B cell (primary cell): ENCODE measurements at regions of chr4 and their contacts with region 1.

Region 1: DNA sequence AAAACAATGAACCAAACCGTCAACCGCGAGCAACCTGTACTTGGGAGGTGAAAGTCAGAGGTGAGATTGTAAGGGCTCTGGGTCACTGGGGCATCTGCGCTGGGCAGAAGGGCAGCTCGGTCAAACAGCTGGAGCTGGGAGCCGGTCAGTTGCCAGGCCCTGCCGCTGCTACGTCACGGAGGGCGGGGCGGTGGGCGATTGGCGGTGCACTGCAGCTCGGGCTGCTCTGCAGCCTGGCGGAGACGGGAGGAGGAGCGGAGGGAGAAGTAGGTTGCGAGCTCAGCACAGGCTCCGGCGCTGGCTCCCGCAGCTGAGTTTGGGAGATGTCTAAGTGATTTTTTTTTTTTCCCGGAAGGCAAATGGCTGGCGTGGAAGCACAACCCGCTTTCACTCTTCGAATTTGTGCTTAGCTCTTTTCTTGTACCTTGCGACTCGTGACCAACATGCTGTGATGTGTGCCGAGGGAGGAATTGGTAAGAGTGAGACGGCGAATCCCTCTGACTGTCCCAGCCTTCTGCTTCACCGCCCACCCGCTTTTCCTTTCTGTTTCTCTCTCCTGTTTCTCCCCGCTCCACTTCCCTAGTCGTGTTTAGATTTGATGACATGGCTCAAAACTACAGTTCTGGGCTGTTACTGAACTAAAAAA is at the start of gene ATP10D:
- DNase-seq: peak; percentile 89
- ATAC-seq: peak; percentile 95
- H3K4me3 ChIP-seq: peak within 1 kb of the TSS; percentile 79 to 97 (median 90)
- H3K4me3 Mint-ChIP-seq: peak within 1 kb of the TSS; percentile 97
- H3K27ac ChIP-seq: peak within 1 kb of the TSS; percentile 93
- H3K27ac Mint-ChIP-seq: peak within 1 kb of the TSS; percentile 96
- H3K4me1 ChIP-seq: peaks cover 32 to 52% of the 10 kb centered on the region in 2 donors
- H3K4me1 Mint-ChIP-seq: peaks cover 57% of the 10 kb centered on the region
- H3K27me3 ChIP-seq: no peaks in the 10 kb centered on the region
- H3K27me3 Mint-ChIP-seq: no peaks in the 10 kb centered on the region
- CTCF ChIP-seq: no peak
- total RNA-seq, gene ATP10D: 36.2 and 41.8 TPM in 2 replicates

Region 2: GRCh38 chr4:47468691-47469365 is 16.3 kb before region 1 on chr4:
- CTCF ChIA-PET with region 1: interaction called, 44 read pairs
- POLR2A ChIA-PET with region 1: interaction called, 13 read pairs
- intact Hi-C with region 1: no loop called
- DNase-seq: no peak
- ATAC-seq: no peak
- H3K4me3 ChIP-seq: no peak overlapping the region
- H3K4me3 Mint-ChIP-seq: no peak overlapping the region
- H3K27ac ChIP-seq: no peak overlapping the region
- H3K27ac Mint-ChIP-seq: no peak overlapping the region
- H3K4me1 ChIP-seq: peaks cover 8 to 12% of the 10 kb centered on the region in 2 donors
- H3K4me1 Mint-ChIP-seq: peaks cover 19% of the 10 kb centered on the region
- H3K27me3 ChIP-seq: no peaks in the 10 kb centered on the region
- H3K27me3 Mint-ChIP-seq: no peaks in the 10 kb centered on the region
- CTCF ChIP-seq: no peak

Region 3: DNA sequence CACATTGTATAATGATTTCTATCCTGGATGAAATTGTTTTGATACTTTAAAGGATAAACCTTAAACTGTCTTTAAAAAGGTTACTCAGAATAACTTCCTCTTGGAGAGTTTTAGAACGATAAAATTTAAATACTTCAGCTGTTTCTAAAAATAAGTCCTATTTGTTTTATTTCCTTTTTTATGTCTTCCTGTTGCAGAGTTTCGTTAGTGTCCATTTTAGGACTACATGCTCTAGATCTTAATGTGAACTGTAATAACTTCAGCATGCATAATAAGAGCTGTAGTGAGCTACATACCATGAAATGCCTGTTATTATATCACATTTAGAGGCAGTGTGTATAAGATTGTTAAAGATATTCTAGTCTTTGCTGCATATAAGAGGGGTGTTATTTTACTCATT is 14.5 kb after region 1 on chr4:
- CTCF ChIA-PET with region 1: interaction called, 11 read pairs
- POLR2A ChIA-PET with region 1: interaction called, 5 read pairs
- intact Hi-C with region 1: loop called (anchors 1 kb)
- DNase-seq: peak; percentile 57
- ATAC-seq: peak; percentile 77
- H3K4me3 ChIP-seq: peak overlapping the region in 3 of 5 experiments; percentile 17 to 55 (median 38)
- H3K4me3 Mint-ChIP-seq: no peak overlapping the region
- H3K27ac ChIP-seq: peak overlapping the region; percentile 85 to 86
- H3K27ac Mint-ChIP-seq: no peak overlapping the region
- H3K4me1 ChIP-seq: peaks cover 44% of the 10 kb centered on the region in 2 donors
- H3K4me1 Mint-ChIP-seq: peaks cover 34% of the 10 kb centered on the region
- H3K27me3 ChIP-seq: no peaks in the 10 kb centered on the region
- H3K27me3 Mint-ChIP-seq: no peaks in the 10 kb centered on the region
- CTCF ChIP-seq: no peak

Region 4: DNA sequence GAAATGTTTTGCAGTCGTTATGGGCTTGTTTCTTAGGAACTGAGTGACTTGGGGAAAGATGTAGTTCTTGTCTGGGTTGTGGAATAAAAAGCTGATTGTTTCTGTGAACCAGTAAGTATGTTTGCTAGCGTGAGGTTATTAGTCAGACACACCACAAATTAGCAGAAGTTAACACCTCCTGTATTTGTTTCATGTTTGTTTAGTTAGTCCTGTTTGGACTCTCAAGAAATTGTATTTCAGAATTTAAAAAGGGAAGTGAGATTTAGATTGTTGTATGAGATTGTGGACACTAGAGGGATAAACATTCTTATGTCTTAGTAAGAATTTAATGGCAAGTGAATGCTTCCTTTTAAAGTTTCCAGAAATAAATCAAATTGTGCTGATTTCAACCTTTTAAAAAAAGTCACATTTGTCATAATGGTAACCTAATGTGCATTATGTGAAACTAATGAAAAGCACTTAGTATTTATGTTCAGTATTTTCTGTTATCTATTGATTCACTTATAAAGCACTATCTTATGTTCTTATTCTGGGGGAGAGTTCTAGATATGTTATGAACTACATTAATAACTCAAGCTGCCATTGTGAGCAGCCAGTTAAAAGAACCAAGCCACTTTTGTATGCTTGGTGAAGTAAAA is 25.5 kb after region 1 on chr4:
- CTCF ChIA-PET with region 1: interaction called, 6 read pairs
- POLR2A ChIA-PET with region 1: interaction called, 8 read pairs
- intact Hi-C with region 1: loop called (anchors 2 kb)
- DNase-seq: peak; percentile 66
- ATAC-seq: peak; percentile 85
- H3K4me3 ChIP-seq: peak overlapping the region in 1 of 5 experiments; percentile 27
- H3K4me3 Mint-ChIP-seq: peak overlapping the region; percentile 64
- H3K27ac ChIP-seq: peak overlapping the region; percentile 52 to 66
- H3K27ac Mint-ChIP-seq: peak overlapping the region; percentile 77
- H3K4me1 ChIP-seq: peaks cover 40 to 63% of the 10 kb centered on the region in 2 donors
- H3K4me1 Mint-ChIP-seq: peaks cover 64% of the 10 kb centered on the region
- H3K27me3 ChIP-seq: no peaks in the 10 kb centered on the region
- H3K27me3 Mint-ChIP-seq: no peaks in the 10 kb centered on the region
- CTCF ChIP-seq: peak; percentile 73

Region 5: DNA sequence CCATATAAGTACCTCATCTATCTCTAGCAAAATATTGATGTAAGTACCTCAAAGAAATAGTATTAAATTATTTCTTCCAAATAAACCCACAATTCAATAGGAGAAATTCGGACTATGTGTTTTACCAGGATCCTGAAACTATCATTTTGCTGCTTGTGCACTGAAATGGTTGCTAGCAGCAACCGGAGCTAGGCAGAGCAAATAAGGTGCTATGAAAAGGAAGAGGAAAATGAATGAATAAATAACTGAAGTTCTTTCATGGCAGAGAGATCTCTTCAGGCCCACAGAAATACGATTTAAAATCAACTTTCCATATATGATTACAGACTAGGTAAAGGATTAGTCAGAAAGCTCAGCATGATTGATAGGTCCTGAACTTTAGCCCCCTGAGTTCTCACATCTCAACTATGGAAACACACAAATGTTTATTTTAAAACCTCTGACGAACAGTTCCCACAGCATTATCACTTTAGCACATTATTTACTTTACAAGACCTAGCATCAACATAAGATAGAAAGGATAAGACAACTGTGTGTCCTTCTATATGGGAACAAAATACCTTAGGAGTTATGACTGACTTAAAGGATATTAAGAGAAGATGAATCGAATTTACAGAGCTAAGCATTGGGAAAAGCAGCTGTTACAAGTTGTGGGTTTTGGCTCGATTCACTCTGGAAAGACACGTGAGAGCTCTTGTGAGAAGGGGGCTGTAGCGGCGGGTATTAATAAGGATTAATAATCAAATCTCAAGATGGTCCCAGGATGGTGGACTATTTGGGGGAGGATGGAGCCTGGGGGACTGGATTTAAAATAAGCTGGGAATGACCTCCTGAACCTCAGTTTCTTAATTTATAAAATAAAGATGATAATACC is 248.4 kb after region 1 on chr4:
- CTCF ChIA-PET with region 1: no interaction called
- POLR2A ChIA-PET with region 1: no interaction called
- intact Hi-C with region 1: no loop called
- DNase-seq: no peak
- ATAC-seq: no peak
- H3K4me3 ChIP-seq: no peak overlapping the region
- H3K4me3 Mint-ChIP-seq: no peak overlapping the region
- H3K27ac ChIP-seq: no peak overlapping the region
- H3K27ac Mint-ChIP-seq: no peak overlapping the region
- H3K4me1 ChIP-seq: no peaks in the 10 kb centered on the region
- H3K4me1 Mint-ChIP-seq: no peaks in the 10 kb centered on the region
- H3K27me3 ChIP-seq: no peaks in the 10 kb centered on the region
- H3K27me3 Mint-ChIP-seq: peaks cover 29% of the 10 kb centered on the region
- CTCF ChIP-seq: no peak